ENCODE measurements at regions of chr17 and their contacts with region 1.

Region 1: GRCh38 chr17:65039336-65039988 is 17.1 kb downstream of the GNA13 start:
- DNase-seq: peak; percentile 70
- H3K4me3 Mint-ChIP-seq: peak overlapping the region; percentile 39
- H3K27ac Mint-ChIP-seq: peak overlapping the region; percentile 89
- H3K4me1 Mint-ChIP-seq: peaks cover 80% of the 10 kb centered on the region
- H3K27me3 Mint-ChIP-seq: no peaks in the 10 kb centered on the region

Region 2: DNA sequence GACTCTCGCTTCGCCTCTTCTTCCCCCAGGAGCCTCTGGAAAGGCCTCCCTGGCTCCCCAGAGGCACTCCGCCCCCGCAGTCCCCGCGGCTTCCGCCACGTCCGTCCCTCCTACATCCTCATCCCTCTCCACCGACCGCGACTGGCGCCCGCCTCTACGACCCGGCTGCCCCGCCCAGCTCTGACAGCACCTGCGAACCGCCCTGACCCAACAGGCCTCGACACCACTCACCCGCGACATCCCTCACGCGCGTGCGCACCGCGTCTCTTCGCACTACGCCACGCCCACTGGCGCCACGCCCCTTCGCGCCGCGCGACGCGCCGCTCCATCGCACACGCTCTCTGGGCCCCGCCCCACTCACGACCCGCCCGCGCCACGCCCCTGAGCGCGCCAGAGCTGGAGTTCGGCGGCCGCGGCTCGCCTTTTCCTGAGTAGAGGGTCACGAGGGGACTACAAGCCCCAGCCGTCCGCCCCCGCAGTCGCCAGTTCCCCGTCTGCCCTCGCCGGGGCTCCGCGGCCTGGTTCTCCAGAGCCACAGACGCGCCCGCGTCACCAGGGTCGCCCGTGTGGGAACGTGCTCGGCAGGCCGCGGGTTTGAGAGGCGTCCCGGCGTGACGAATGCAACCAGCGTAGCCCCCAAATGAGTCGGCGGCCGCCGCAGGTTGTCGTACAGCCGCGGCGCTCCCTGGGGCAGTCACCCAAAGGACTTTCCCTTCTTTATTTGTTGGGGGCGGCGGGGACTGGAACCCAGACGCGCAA is 64.0 kb before region 1 on chr17:
- CTCF ChIA-PET with region 1: interaction called, 3 read pairs
- intact Hi-C with region 1: loop called (anchors 1 kb)
- DNase-seq: peak; percentile 94
- H3K4me3 Mint-ChIP-seq: peak overlapping the region; percentile 90
- H3K27ac Mint-ChIP-seq: peak overlapping the region; percentile 91
- H3K4me1 Mint-ChIP-seq: peaks cover 45% of the 10 kb centered on the region
- H3K27me3 Mint-ChIP-seq: no peaks in the 10 kb centered on the region

Region 3: GRCh38 chr17:64984851-64985521 is 54.5 kb before region 1 on chr17:
- CTCF ChIA-PET with region 1: interaction called, 3 read pairs
- intact Hi-C with region 1: loop called (anchors 1 kb)
- DNase-seq: peak; percentile 50
- H3K4me3 Mint-ChIP-seq: peak overlapping the region; percentile 73
- H3K27ac Mint-ChIP-seq: peak overlapping the region; percentile 95
- H3K4me1 Mint-ChIP-seq: peaks cover 32% of the 10 kb centered on the region
- H3K27me3 Mint-ChIP-seq: no peaks in the 10 kb centered on the region

Region 4: DNA sequence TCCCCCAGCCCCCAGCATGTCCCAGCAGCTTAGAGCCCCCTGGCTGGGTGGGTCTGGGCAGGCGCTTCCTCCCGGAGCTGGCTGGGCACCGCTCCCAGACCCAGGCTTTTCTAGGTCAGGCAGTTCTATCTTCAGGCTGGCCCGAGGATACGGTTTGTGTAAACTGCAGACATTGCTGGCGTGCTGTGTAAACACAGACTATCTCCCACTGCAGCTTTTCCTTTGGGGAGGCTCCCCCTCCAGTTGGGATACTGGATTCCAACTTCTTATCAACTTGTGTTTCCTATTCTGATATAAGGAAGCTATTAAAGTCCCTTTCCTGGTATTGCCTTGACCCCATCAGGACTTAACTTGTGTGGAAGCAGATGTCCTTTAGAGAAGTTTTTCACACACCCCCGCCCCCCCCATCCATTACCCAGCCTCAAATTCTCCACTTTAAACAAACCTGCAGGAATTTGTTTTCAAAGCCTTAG is 35.4 kb after region 1 on chr17:
- CTCF ChIA-PET with region 1: no interaction called
- intact Hi-C with region 1: no loop called
- DNase-seq: no peak
- H3K4me3 Mint-ChIP-seq: no peak overlapping the region
- H3K27ac Mint-ChIP-seq: no peak overlapping the region
- H3K4me1 Mint-ChIP-seq: no peaks in the 10 kb centered on the region
- H3K27me3 Mint-ChIP-seq: no peaks in the 10 kb centered on the region